B cell (primary cell): ENCODE measurements at regions of chr9 and their contacts with region 1.

Region 1: DNA sequence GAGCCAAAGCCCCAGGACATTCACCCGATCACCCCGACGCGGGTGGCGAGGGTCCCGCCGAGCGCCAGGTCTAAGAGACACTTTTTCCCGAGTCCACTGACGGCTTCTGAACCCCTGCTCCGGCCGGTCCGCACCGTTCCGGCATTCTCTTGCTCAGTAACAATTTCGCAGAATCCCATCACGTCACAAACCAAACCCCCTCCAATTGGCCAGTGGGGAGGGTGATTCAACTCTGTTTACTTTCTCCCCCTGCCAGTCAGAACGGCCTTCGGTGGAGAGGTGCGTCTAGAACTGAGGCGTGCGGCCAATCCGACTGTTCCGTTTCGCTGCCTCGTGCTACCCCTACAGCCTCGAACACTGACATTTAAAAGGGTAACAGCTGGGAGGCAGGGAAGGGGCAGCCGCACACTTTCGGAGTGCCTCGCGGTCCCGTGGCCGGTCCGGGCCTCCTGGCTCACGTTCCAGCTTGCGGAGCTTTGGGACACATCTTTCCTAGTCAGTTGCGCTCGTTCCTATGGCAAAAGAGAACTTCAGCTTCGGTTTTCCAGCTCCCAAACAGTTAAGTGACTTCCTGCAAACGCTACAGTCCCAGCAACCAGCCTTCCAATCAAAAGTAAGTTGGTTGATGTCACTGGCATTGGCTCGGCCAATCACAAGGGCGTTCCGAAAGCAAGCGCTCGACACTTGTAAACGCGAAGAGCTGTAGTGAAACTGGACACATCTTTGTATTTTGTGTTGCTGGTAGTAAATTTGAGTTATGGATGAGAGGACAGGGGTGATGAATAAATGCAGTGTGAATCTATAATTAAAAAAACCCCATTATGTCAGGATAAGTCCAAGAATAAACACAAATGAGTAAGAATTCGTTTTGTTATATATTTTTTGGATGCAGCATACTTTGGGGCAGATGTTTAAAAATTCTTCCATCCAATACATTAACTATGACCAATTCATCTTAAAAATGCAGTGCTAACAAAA is at the start of gene KLF9:
- DNase-seq: peak; percentile 95
- ATAC-seq: peak; percentile 73
- H3K4me3 ChIP-seq: peak within 1 kb of the TSS; percentile 60 to 96 (median 94)
- H3K4me3 Mint-ChIP-seq: peak within 1 kb of the TSS; percentile 100
- H3K27ac ChIP-seq: peak within 1 kb of the TSS; percentile 95 to 98
- H3K27ac Mint-ChIP-seq: peak within 1 kb of the TSS; percentile 100
- H3K4me1 ChIP-seq: peaks cover 38 to 45% of the 10 kb centered on the region in 2 donors
- H3K4me1 Mint-ChIP-seq: peaks cover 47% of the 10 kb centered on the region
- H3K27me3 ChIP-seq: no peaks in the 10 kb centered on the region
- H3K27me3 Mint-ChIP-seq: no peaks in the 10 kb centered on the region
- CTCF ChIP-seq: no peak
- total RNA-seq, gene KLF9: 12.1 and 12.7 TPM in 2 replicates

Region 2: DNA sequence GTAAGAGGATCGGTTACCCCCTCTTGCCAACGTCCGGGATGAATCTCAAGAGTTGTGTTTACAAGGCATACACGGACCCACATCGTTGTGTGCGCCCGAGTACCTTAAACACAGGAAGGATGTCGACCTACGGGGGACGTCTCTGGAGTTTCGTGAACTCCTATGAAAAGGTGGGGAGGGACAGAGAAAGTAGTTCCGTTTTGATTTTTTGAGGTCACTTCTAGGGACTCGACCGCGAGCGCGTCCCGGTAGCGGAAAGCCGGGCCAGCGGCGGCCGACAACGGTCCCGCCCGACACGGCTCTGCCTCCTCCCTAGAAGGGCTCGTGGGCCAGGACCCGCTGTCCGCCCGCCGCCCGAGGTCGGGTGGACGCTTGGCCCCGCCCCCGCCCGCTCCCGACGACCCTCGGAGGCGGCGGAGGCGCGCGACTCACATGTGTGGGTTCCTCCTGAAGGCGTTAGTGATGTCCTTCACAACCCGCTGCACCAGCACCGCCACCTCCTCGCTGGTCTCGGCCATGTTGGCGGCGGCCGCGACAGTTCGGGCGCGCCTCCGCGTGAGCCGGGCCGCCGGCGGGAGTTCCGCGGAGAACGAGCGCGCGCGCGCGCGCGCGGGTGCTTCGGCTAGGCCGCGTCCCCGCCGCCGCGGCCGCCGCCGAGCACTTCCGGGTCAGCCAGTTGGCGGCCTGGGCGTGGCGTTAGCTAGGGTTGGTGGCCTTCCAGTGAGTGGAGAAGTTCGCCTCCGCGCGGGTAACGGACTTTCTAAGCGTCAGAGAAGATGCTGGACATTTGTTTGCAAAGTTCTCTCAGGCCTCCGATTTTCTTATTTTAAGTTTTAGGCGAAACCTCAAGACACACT is 654.4 kb before region 1 on chr9 and contains the start of gene PTAR1:
- CTCF ChIA-PET with region 1: no interaction called
- POLR2A ChIA-PET with region 1: no interaction called
- intact Hi-C with region 1: loop called (anchors 5 kb)
- DNase-seq: peak; percentile 95
- ATAC-seq: peak; percentile 86
- H3K4me3 ChIP-seq: peak within 1 kb of the TSS; percentile 84 to 90 (median 89)
- H3K4me3 Mint-ChIP-seq: peak within 1 kb of the TSS; percentile 97
- H3K27ac ChIP-seq: peak within 1 kb of the TSS; percentile 77 to 94
- H3K27ac Mint-ChIP-seq: peak within 1 kb of the TSS; percentile 97
- H3K4me1 ChIP-seq: peaks cover 12 to 13% of the 10 kb centered on the region in 2 donors
- H3K4me1 Mint-ChIP-seq: peaks cover 26% of the 10 kb centered on the region
- H3K27me3 ChIP-seq: no peaks in the 10 kb centered on the region
- H3K27me3 Mint-ChIP-seq: no peaks in the 10 kb centered on the region
- CTCF ChIP-seq: no peak
- total RNA-seq, gene PTAR1: 72.1 and 82.7 TPM in 2 replicates

Region 3: DNA sequence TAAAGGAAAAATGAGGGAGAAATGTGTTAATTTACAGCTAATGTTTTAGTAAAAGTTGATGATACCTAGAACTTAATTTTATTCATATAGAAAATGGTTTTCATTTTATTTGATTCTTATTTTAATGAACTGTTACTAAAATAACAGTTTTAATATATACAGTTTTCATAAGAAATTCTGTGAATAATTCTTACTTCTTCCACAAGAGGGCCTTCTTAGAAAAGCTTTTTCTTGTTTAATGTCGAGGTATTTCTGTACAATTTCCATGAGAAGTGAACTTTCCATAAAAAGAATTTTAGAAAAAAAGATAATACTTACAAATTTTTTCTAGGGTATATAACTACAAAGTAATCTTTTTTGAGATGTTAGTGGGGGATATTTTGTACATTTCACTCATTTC is 73.5 kb before region 1 on chr9:
- CTCF ChIA-PET with region 1: interaction called, 9 read pairs
- POLR2A ChIA-PET with region 1: no interaction called
- intact Hi-C with region 1: loop called (anchors 2 kb)
- DNase-seq: peak; percentile 32
- ATAC-seq: no peak
- H3K4me3 ChIP-seq: no peak overlapping the region
- H3K4me3 Mint-ChIP-seq: no peak overlapping the region
- H3K27ac ChIP-seq: no peak overlapping the region
- H3K27ac Mint-ChIP-seq: no peak overlapping the region
- H3K4me1 ChIP-seq: no peaks in the 10 kb centered on the region
- H3K4me1 Mint-ChIP-seq: no peaks in the 10 kb centered on the region
- H3K27me3 ChIP-seq: no peaks in the 10 kb centered on the region
- H3K27me3 Mint-ChIP-seq: no peaks in the 10 kb centered on the region
- CTCF ChIP-seq: peak; percentile 78

Region 4: GRCh38 chr9:70398145-70398556 is 15.9 kb before region 1 on chr9:
- CTCF ChIA-PET with region 1: interaction called, 7 read pairs
- POLR2A ChIA-PET with region 1: interaction called, 17 read pairs
- intact Hi-C with region 1: loop called (anchors 1 kb)
- DNase-seq: peak; percentile 81
- ATAC-seq: peak; percentile 97
- H3K4me3 ChIP-seq: peak overlapping the region in 2 of 5 experiments; percentile 1 to 26
- H3K4me3 Mint-ChIP-seq: peak overlapping the region; percentile 61
- H3K27ac ChIP-seq: peak overlapping the region; percentile 25 to 74
- H3K27ac Mint-ChIP-seq: peak overlapping the region; percentile 91
- H3K4me1 ChIP-seq: peaks cover 33 to 34% of the 10 kb centered on the region in 2 donors
- H3K4me1 Mint-ChIP-seq: peaks cover 52% of the 10 kb centered on the region
- H3K27me3 ChIP-seq: no peaks in the 10 kb centered on the region
- H3K27me3 Mint-ChIP-seq: no peaks in the 10 kb centered on the region
- CTCF ChIP-seq: no peak

Region 5: DNA sequence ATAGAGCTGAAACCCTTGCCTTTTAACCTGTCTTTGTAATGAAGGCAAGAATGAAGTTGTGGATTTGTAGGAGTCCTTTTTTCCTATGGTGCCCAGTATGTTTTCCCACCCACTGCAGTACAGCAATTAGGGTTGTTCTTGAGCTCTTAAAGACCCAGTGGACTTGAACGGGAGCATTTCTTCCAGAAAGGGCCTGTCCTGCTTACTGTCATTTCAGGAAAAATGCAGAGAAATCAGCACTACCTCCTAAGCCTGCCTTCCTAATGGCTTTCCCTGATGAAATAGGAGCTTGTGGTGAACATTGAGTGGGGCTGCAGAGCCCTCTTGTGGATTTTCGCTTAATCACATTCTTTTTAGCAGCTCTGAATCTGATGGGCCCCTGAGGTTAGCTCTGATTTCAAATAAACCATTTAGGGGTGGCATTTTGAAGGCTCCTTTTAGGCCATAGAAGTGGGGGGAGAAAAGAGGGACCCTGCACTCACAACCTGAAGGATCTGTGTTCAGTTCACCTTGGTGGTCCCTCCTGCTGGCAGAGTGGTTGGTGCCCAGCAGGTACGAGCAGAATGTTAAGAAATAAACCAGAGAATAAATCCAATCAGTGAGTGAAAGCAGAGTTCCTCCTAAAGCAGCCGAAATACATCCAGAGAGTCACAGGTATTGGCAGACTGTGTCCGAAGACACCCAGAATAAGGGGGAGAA is 188.4 kb after region 1 on chr9:
- CTCF ChIA-PET with region 1: interaction called, 12 read pairs
- POLR2A ChIA-PET with region 1: interaction called, 8 read pairs
- intact Hi-C with region 1: no loop called
- DNase-seq: peak; percentile 72
- ATAC-seq: peak; percentile 53
- H3K4me3 ChIP-seq: no peak overlapping the region
- H3K4me3 Mint-ChIP-seq: no peak overlapping the region
- H3K27ac ChIP-seq: no peak overlapping the region
- H3K27ac Mint-ChIP-seq: no peak overlapping the region
- H3K4me1 ChIP-seq: peaks cover 2% of the 10 kb centered on the region in 2 donors
- H3K4me1 Mint-ChIP-seq: peaks cover 7% of the 10 kb centered on the region
- H3K27me3 ChIP-seq: no peaks in the 10 kb centered on the region
- H3K27me3 Mint-ChIP-seq: peaks cover 4% of the 10 kb centered on the region
- CTCF ChIP-seq: peak; percentile 86

Region 6: GRCh38 chr9:72364679-72365524 is 1950.8 kb after region 1 on chr9 and contains the start of gene ZFAND5:
- CTCF ChIA-PET with region 1: no interaction called
- POLR2A ChIA-PET with region 1: no interaction called
- intact Hi-C with region 1: loop called (anchors 5 kb)
- DNase-seq: peak; percentile 97
- ATAC-seq: peak; percentile 78
- H3K4me3 ChIP-seq: peak within 1 kb of the TSS; percentile 71 to 95 (median 80)
- H3K4me3 Mint-ChIP-seq: peak within 1 kb of the TSS; percentile 95
- H3K27ac ChIP-seq: peak within 1 kb of the TSS; percentile 99 to 100
- H3K27ac Mint-ChIP-seq: peak within 1 kb of the TSS; percentile 97
- H3K4me1 ChIP-seq: peaks cover 22 to 24% of the 10 kb centered on the region in 2 donors
- H3K4me1 Mint-ChIP-seq: peaks cover 40% of the 10 kb centered on the region
- H3K27me3 ChIP-seq: no peaks in the 10 kb centered on the region
- H3K27me3 Mint-ChIP-seq: no peaks in the 10 kb centered on the region
- CTCF ChIP-seq: no peak
- total RNA-seq, gene ZFAND5: 93.8 and 95.3 TPM in 2 replicates